AG04450 (cell line): ENCODE measurements at regions of chr3 and their contacts with region 1.

Region 1: GRCh38 chr3:58177747-58178527 is 32.8 kb downstream of the DNASE1L3 start:
- DNase-seq: peak; percentile 48
- H3K4me3 ChIP-seq: peak overlapping the region; percentile 49
- H3K27ac ChIP-seq: no peak overlapping the region
- H3K27me3 ChIP-seq: no peaks in the 10 kb centered on the region
- CTCF ChIP-seq: peak; percentile 89

Region 2: DNA sequence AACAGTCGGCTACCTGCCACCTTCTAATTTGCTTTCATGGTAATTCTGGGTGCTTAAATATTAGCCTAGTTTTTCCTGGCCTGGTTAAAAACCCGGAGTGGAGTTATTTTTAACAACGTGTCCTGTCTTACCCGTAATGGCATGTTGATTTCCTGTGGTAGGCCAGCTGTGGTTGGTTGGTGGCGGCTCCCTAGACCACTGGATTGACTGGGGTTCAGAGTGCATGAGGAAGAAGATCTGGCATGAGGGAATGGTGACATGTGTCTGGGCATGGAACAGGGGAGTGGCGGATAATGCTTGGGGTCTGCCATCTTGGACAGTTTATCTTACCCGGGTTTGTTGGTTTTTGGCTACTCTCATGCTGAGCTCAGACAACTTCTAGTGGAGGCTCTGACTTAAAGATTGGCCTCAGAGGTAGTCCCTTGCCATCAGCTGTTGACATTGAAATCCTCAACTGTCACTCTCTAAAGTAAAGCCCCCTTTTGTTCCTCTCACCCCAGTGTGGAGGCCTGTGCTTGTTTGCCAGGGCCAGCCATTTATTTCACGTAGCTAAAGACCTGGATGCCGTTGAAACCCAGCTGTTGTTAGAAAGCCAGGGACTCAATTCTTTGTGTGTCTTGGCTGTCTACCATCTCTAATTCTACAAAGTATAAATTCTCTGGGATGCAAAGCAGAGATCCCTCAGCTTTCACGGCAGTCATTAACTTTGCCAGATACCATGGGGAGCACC is 48.7 kb before region 1 on chr3:
- CTCF ChIA-PET with region 1: no interaction called
- POLR2A ChIA-PET with region 1: no interaction called
- DNase-seq: no peak
- H3K4me3 ChIP-seq: no peak overlapping the region
- H3K27ac ChIP-seq: no peak overlapping the region
- H3K27me3 ChIP-seq: no peaks in the 10 kb centered on the region
- CTCF ChIP-seq: no peak

Region 3: DNA sequence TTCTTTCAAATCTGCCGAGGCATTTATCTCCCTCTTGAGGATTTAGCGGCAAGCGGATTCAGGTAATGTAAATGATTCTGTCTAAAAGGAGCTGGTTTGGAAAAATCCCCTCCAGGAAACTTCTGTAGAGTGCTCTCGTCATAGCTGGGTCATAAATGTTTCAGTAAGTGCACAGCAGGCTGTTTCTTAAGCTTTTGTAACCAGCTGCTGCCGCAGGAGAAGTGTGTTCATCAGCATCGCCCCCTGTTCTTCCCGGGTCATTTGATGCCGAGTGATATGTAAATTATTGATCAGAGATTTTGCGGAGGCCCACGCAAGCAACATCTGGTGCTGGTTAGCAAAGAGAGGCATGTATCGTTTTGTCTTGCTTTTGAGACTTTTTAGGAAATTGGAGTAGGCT is 20.2 kb before region 1 on chr3:
- CTCF ChIA-PET with region 1: interaction called, 14 read pairs
- POLR2A ChIA-PET with region 1: no interaction called
- DNase-seq: no peak
- H3K4me3 ChIP-seq: no peak overlapping the region
- H3K27ac ChIP-seq: no peak overlapping the region
- H3K27me3 ChIP-seq: no peaks in the 10 kb centered on the region
- CTCF ChIP-seq: no peak

Region 4: DNA sequence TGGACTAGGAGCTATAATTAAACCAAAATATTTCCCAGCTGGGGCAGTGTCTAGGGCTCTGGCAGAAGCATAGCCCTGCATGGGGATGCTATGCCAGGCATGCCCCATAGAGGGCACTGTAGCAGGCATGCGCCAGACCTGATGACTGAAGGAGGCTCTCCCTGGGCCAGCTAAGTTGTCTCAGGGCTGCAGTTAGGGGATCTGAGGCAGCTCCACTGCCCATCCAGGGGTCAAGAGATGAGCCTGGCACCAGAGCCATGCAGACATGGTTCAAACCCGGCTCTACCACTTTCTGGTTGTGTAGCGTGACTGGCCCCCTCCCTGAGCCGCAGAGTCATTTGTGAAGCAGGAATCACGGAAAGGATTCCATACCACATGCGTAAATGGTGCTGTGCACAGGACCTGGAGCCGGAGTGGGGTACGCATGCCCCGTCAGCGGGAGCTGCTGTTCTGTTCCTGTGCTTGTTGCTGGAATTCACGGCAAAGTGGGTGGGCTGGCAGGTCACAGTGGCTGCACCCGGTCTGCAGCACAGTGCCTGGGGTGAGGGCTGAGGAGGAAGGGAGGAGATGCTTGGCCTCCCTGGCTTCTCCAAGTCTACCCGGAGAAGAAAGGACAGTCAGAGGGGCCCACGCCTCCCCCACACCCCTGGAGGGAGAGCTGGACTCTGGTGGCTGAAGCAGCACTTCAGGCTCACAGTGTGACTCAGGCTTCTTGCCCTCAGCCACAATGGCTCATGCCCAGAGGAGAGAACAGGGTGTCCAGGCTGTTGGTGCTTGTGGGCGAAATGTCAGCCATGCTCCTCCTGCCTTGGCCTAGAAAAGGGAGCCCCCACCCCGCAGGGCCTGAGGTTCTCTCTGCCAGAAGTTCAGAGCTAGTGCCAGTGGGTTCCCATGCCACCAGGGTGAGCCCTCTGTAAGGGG is 10.2 kb before region 1 on chr3:
- CTCF ChIA-PET with region 1: interaction called, 76 read pairs
- POLR2A ChIA-PET with region 1: interaction called, 5 read pairs
- DNase-seq: peak; percentile 37
- H3K4me3 ChIP-seq: no peak overlapping the region
- H3K27ac ChIP-seq: no peak overlapping the region
- H3K27me3 ChIP-seq: no peaks in the 10 kb centered on the region
- CTCF ChIP-seq: peak; percentile 98

Region 5: GRCh38 chr3:58188173-58188564 is 10.2 kb after region 1 on chr3:
- CTCF ChIA-PET with region 1: interaction called, 46 read pairs
- POLR2A ChIA-PET with region 1: no interaction called
- DNase-seq: no peak
- H3K4me3 ChIP-seq: no peak overlapping the region
- H3K27ac ChIP-seq: no peak overlapping the region
- H3K27me3 ChIP-seq: peaks cover 2% of the 10 kb centered on the region
- CTCF ChIP-seq: no peak

Region 6: GRCh38 chr3:58217209-58217811 is 39.4 kb after region 1 on chr3:
- CTCF ChIA-PET with region 1: interaction called, 11 read pairs
- POLR2A ChIA-PET with region 1: no interaction called
- DNase-seq: no peak
- H3K4me3 ChIP-seq: no peak overlapping the region
- H3K27ac ChIP-seq: no peak overlapping the region
- H3K27me3 ChIP-seq: peaks cover 20% of the 10 kb centered on the region
- CTCF ChIP-seq: peak; percentile 86

Region 7: GRCh38 chr3:58299839-58300516 is 122.0 kb after region 1 on chr3:
- CTCF ChIA-PET with region 1: interaction called, 37 read pairs
- POLR2A ChIA-PET with region 1: no interaction called
- DNase-seq: peak; percentile 13
- H3K4me3 ChIP-seq: no peak overlapping the region
- H3K27ac ChIP-seq: no peak overlapping the region
- H3K27me3 ChIP-seq: peaks cover 10% of the 10 kb centered on the region
- CTCF ChIP-seq: peak; percentile 63